SK-N-SH (cell line): ENCODE measurements at regions of chr2 and their contacts with region 1.

Region 1: DNA sequence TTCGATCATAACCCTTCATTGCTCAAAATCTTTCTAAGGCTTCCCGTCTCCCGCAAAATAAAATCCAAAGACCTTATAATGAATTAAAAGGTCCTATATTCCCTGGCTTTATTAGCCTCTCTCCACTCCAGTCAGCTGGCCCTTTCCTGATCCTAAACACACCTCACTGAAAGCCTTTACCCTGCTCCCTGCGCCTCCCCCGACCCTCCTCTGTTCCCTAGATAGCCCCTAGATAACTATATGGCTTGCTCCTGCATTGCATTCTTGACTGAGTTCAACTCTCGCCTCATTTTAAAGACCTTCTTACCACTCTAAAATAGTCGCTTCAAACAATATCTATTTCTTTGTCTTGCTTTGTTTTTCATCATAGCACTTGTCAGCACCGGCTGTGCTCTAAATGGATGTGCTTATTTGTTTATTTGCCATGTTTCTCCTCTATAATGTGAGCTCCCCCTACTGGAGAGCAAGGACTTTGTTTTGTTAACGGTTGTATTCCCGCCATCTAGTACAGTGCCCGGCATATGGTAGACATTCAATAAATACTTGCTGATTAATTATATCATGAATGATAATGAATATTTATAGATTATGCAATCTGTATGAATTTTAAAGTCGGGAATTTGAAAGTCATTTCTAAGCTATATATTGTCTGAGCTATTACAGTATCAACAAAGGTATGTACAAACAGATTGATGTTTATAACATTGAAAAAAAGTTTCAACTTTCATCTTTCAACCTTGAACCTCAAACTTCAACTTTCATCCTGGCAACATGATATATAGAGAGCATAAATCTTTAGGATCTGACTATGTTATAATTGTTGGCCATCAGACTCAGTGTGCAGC is 32.4 kb upstream of the VIT start:
- DNase-seq: peak; percentile 66
- H3K4me3 ChIP-seq: no peak overlapping the region
- H3K27ac ChIP-seq: no peak overlapping the region
- H3K4me1 ChIP-seq: no peaks in the 10 kb centered on the region; a peak in 1 of 4 replicates
- H3K27me3 ChIP-seq: no peaks in the 10 kb centered on the region
- CTCF ChIP-seq: peak; percentile 97
- EP300 ChIP-seq: no peak; a peak in 1 of 4 replicates
- RAD21 ChIP-seq: peak; percentile 94

Region 2: DNA sequence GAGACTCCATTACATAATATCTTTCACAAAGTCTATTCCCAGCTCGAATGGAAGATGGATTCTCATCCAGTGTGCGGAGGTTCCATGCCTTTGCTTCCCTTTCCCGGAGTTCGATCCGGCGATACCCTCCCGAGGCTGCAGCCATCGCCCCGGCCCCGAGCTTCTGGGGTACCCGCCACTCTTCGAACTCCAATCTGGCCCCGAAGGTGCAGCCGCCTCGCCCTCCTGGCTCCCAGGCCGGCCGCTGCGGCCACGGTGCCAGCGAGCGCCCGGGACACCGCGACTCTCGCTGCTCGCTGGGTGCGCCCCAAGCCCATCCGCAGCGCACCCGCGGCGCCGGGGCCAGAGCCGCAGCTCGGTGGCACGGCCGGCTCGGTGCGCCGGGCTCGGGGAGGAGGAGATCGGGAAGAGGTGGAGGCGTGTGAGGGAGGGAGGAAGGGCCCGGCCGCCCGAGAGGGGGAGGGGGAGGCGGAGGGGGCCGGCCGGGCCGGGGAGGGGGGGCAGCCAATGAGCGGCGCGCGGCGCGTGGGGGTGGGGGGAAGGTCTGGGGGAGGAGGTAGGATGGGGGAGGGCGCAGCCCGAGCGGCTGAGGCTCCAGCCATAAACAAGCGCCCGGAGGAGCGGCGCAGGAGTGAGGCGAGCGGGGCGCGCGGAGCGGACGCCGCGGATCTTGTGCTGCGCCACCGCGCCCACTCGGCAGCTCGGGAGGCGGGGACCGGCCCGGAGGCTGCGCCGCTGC is 308.8 kb before region 1 on chr2 and contains the start of gene CRIM1:
- CTCF ChIA-PET with region 1: interaction called, 57 read pairs
- POLR2A ChIA-PET with region 1: no interaction called
- DNase-seq: peak; percentile 82
- H3K4me3 ChIP-seq: peak within 1 kb of the TSS; percentile 80 to 91
- H3K27ac ChIP-seq: peak within 1 kb of the TSS; percentile 55 to 96
- H3K4me1 ChIP-seq: peaks cover 2 to 17% of the 10 kb centered on the region in 2 experiments
- H3K27me3 ChIP-seq: no peaks in the 10 kb centered on the region
- CTCF ChIP-seq: no peak
- EP300 ChIP-seq: peak in 1 of 2 experiments; percentile 12; a peak in 1 of 4 replicates
- RAD21 ChIP-seq: no peak
- polyA plus RNA-seq, gene CRIM1: 228 and 244 TPM in 2 replicates

Region 3: GRCh38 chr2:36544638-36545338 is 119.3 kb before region 1 on chr2:
- CTCF ChIA-PET with region 1: interaction called, 10 read pairs
- POLR2A ChIA-PET with region 1: no interaction called
- DNase-seq: no peak
- H3K4me3 ChIP-seq: no peak overlapping the region
- H3K27ac ChIP-seq: peak overlapping the region in 1 of 2 experiments; percentile 98; a peak in 2 of 4 replicates
- H3K4me1 ChIP-seq: peaks cover 3 to 4% of the 10 kb centered on the region in 2 experiments; a peak in 2 of 4 replicates
- H3K27me3 ChIP-seq: no peaks in the 10 kb centered on the region
- CTCF ChIP-seq: peak; percentile 62
- EP300 ChIP-seq: no peak
- RAD21 ChIP-seq: no peak

Region 4: DNA sequence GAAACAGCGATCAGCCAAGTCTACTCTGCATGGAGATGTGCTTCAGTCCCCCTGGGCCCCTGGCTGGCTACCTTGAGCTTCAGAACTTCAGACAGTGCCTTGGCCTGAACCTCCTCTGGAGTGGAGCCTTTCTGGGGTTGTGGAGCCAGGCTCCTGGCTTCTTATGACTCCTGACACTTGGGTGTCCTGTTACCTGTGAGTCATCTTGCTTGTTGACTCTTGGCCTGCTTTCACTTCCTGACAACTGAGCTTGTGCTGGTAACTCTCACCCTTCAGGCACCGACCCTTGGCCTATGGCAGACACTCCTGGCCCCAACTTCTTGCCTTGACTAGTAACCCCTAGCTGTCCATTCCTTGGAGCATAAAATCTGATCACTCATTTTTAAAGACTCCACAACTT is 14.0 kb before region 1 on chr2:
- CTCF ChIA-PET with region 1: interaction called, 32 read pairs
- POLR2A ChIA-PET with region 1: no interaction called
- DNase-seq: no peak
- H3K4me3 ChIP-seq: no peak overlapping the region
- H3K27ac ChIP-seq: peak overlapping the region in 1 of 2 experiments; percentile 45; a peak in 2 of 4 replicates
- H3K4me1 ChIP-seq: peaks cover 0 to 13% of the 10 kb centered on the region in 2 experiments; a peak in 2 of 4 replicates
- H3K27me3 ChIP-seq: no peaks in the 10 kb centered on the region
- CTCF ChIP-seq: no peak
- EP300 ChIP-seq: peak in 1 of 2 experiments; percentile 71; a peak in 1 of 4 replicates
- RAD21 ChIP-seq: no peak

Region 5: GRCh38 chr2:36777788-36778187 is 113.7 kb after region 1 on chr2:
- CTCF ChIA-PET with region 1: interaction called, 16 read pairs
- POLR2A ChIA-PET with region 1: no interaction called
- DNase-seq: no peak
- H3K4me3 ChIP-seq: no peak overlapping the region
- H3K27ac ChIP-seq: no peak overlapping the region
- H3K4me1 ChIP-seq: no peaks in the 10 kb centered on the region
- H3K27me3 ChIP-seq: no peaks in the 10 kb centered on the region; the same call in 1 of the 2 replicates
- CTCF ChIP-seq: no peak
- EP300 ChIP-seq: no peak
- RAD21 ChIP-seq: no peak